ENCODE measurements at regions of chr2 and their contacts with region 1.

Region 1: DNA sequence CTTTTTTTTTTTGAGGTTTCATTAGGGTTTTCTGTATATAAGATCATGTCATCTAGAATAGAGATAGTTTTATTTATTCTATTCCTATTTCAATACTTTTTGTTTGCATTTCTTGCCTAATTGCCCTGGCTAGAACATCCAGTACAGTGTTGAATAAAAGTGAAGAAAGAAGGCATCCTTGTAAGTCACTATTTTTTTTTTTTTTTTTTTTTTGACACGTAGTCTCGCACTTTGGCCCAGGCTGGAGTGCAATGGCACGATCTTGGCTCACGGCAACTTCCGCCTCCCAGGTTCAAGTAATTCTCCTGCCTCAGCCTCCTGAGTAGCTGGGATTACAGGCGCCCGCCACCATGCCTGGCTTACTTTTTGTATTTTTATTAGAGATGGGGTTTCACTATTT is 27.8 kb upstream of the RANBP2 start:
- DNase-seq: no peak
- ATAC-seq: no peak
- H3K4me3 ChIP-seq: no peak overlapping the region
- H3K27ac ChIP-seq: no peak overlapping the region; the same call in 1 of the 2 replicates
- H3K4me1 ChIP-seq: no peaks in the 10 kb centered on the region; the same call in 1 of the 2 replicates
- H3K27me3 ChIP-seq: no peaks in the 10 kb centered on the region
- CTCF ChIP-seq: no peak

Region 2: GRCh38 chr2:108870069-108870644 is 178.7 kb after region 1 on chr2:
- CTCF ChIA-PET with region 1: interaction called, 14 read pairs
- POLR2A ChIA-PET with region 1: no interaction called
- in situ Hi-C with region 1: no loop called
- intact Hi-C with region 1: no loop called
- DNase-seq: no peak
- ATAC-seq: no peak
- H3K4me3 ChIP-seq: no peak overlapping the region
- H3K27ac ChIP-seq: no peak overlapping the region
- H3K4me1 ChIP-seq: no peaks in the 10 kb centered on the region
- H3K27me3 ChIP-seq: no peaks in the 10 kb centered on the region
- CTCF ChIP-seq: no peak

Measured in Panc1 (cell line).